Ascending aorta (tissue), 2 donors: ENCODE measurements at regions of chr15 and their contacts with region 1.

Region 1: DNA sequence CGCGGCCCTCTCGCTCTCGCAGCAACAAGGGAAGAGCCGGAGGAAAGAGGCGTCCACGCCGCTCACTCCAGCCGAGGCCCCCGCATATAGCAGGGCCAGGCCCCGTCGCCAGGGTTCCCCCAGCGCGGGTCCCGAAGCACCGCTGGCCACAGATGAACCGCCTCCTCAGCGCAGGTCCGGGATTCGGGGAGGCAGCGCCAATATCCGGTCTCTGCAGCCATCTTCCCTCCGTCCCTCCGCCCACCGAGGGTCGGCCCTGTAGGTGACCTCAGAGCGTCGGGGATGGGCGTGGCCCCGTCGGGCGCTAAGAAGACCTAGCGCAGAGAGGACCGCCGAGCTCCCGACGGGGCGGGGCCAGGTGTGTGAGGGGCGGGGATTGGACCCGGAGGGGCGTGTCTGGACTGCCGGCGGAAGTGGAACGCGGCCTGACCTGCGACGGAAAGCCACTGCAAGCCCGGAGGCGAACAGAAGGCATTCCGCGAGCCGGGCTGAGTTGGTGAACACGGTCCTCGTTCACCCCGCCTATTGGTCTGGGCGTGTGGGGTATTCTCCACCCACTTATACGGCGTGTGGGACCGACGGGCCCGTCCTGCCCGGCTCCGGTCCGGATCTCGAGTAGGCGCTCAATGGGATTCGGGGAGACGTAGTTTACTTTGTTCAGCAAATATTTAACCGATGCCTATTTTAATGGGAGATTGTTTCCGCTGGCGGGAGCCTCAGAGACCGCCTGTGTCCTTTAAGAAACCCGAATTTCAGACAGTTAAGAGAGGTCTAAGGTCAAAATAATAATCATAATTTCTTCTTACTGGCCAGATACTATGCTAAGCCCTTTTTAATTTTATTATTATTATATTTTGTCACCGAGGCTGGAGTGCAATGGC is 26.9 kb upstream of the MTHFS start:
- DNase-seq: peak; percentile 82 to 96
- H3K4me3 ChIP-seq: peak overlapping the region; percentile 79 to 86
- H3K27ac ChIP-seq: peak overlapping the region; percentile 95 to 96
- H3K4me1 ChIP-seq: peaks cover 5 to 6% of the 10 kb centered on the region in 2 donors
- H3K27me3 ChIP-seq: no peaks in the 10 kb centered on the region
- CTCF ChIP-seq: no peak

Region 2: DNA sequence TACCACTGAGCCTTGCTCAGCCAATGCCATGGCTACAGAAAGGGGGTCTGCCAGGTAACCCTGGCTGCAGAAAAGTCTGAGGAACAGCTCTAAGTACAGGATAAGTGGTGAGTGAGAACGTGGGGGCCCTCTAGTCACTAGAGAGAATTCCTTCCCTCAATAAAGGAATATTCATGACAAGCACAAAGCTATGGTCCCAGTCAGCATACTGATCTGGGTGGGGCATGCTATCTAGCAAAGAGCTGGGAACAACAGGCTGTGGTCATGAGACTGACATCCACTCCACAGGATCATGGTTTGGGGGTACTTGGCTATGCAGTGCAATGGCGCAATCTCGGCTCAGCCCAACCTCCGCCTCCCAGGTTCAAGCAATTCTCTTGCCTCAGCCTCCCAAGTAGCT is 167.4 kb before region 1 on chr15:
- intact Hi-C with region 1: no loop called
- DNase-seq: no peak
- H3K4me3 ChIP-seq: no peak overlapping the region
- H3K27ac ChIP-seq: no peak overlapping the region
- H3K4me1 ChIP-seq: no peaks in the 10 kb centered on the region
- H3K27me3 ChIP-seq: no peaks in the 10 kb centered on the region
- CTCF ChIP-seq: no peak

Region 3: GRCh38 chr15:80058851-80059785 is 135.4 kb after region 1 on chr15 and contains the start of gene ZFAND6:
- intact Hi-C with region 1: loop called (anchors 1 kb)
- DNase-seq: peak; percentile 78 to 97
- H3K4me3 ChIP-seq: peak within 1 kb of the TSS; percentile 87 to 96
- H3K27ac ChIP-seq: peak within 1 kb of the TSS; percentile 77 to 94
- H3K4me1 ChIP-seq: peaks cover 0 to 22% of the 10 kb centered on the region in 2 donors
- H3K27me3 ChIP-seq: no peaks in the 10 kb centered on the region
- CTCF ChIP-seq: peak in 1 of 3 experiments; percentile 6
- total RNA-seq, gene ZFAND6: 49.6 TPM